ENCODE measurements at regions of chr2 and their contacts with region 1.

Region 1: DNA sequence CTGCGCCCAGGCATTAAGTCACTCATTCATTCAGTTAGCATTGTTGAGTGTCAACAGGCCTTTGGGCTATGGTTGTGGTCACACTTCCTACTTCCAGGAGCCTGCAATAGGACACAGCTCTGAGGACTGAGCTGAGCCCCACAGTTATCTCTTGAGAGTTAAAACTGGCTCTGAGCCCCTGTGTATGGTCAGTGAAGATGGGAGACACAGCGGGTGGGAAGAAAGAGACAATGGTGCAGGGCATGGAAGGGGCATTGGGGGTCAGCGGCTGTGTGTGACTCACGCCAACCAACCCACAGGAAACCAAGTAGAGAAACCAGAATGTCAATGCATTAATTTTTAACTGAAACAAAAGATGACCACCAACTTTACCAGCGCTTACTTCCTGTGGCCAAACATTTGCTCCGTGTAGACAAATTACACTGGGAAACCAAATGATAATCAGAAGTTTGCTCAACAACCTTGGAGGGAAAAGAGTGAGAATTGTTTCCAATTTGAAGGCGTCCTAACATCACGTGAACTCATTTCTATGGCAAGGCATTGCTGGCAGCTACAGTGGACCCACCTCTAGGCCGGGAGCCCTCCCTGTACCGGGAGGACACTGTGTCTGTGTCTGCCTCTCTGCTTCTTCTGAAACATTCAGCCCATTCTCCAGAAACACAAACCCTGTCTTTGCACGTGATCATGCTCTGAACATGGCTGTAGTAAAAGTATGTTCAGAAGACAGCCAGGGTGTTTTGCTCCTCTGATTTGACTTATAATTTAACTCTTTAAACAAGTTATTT is 212.0 kb upstream of the ID2 start:
- DNase-seq: no peak
- ATAC-seq: no peak
- H3K4me3 ChIP-seq: no peak overlapping the region
- H3K27ac ChIP-seq: no peak overlapping the region
- H3K4me1 ChIP-seq: no peaks in the 10 kb centered on the region
- H3K27me3 ChIP-seq: no peaks in the 10 kb centered on the region
- CTCF ChIP-seq: no peak

Region 2: GRCh38 chr2:7984693-7985353 is 485.1 kb before region 1 on chr2:
- CTCF ChIA-PET with region 1: no interaction called
- POLR2A ChIA-PET with region 1: no interaction called
- in situ Hi-C with region 1: no loop called
- intact Hi-C with region 1: no loop called
- DNase-seq: no peak
- ATAC-seq: no peak
- H3K4me3 ChIP-seq: no peak overlapping the region
- H3K27ac ChIP-seq: no peak overlapping the region
- H3K4me1 ChIP-seq: no peaks in the 10 kb centered on the region
- H3K27me3 ChIP-seq: no peaks in the 10 kb centered on the region
- CTCF ChIP-seq: no peak

Region 3: GRCh38 chr2:8539743-8540551 is 70.0 kb after region 1 on chr2:
- CTCF ChIA-PET with region 1: interaction called, 11 read pairs
- POLR2A ChIA-PET with region 1: no interaction called
- in situ Hi-C with region 1: no loop called
- intact Hi-C with region 1: no loop called
- DNase-seq: no peak
- ATAC-seq: no peak
- H3K4me3 ChIP-seq: no peak overlapping the region
- H3K27ac ChIP-seq: no peak overlapping the region
- H3K4me1 ChIP-seq: no peaks in the 10 kb centered on the region; the same call in 1 of the 2 replicates
- H3K27me3 ChIP-seq: no peaks in the 10 kb centered on the region
- CTCF ChIP-seq: no peak

Measured in Panc1 (cell line).